BJ (cell line): ENCODE measurements at regions of chr5 and their contacts with region 1.

Region 1: DNA sequence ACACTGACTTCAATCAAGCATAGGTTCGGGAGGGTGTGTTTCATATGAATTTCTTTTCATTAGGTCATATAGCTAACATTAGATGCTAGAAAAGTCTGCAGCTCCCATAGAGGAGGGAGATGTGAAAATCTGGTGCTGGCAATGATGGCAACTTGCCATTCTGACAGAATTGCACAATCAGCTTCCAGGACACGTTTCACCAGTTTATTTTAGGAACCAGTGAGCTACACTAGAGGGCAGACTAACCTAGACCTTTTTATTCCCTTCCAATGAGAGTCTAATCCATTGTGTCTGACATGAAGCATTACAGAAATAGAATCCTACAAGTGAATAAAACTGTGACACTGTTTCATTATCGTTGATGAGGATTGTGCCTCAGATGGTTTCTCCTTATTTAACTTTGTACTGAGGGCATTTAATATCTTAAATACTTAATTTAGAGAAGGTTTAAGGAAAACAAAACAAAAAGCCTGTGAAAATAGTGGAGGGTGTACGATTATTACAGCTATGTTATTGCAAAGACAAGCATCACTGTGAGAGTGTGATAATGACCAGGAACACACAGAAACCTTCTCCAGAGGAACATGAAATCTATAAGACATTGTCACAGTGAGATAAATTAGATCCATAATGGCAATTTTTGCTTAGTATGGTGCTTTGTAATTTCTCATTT is 363.3 kb upstream of the RPS23 start:
- DNase-seq: peak; percentile 36
- H3K4me3 ChIP-seq: no peak overlapping the region
- H3K27me3 ChIP-seq: no peaks in the 10 kb centered on the region
- CTCF ChIP-seq: peak; percentile 71

Region 2: GRCh38 chr5:82439750-82440445 is 201.6 kb before region 1 on chr5:
- CTCF ChIA-PET with region 1: no interaction called
- POLR2A ChIA-PET with region 1: interaction called, 10 read pairs
- DNase-seq: no peak
- H3K4me3 ChIP-seq: no peak overlapping the region
- H3K27me3 ChIP-seq: no peaks in the 10 kb centered on the region
- CTCF ChIP-seq: no peak

Region 3: GRCh38 chr5:83564069-83564749 is 922.7 kb after region 1 on chr5:
- CTCF ChIA-PET with region 1: interaction called, 14 read pairs
- POLR2A ChIA-PET with region 1: no interaction called
- DNase-seq: no peak
- H3K4me3 ChIP-seq: no peak overlapping the region
- H3K27me3 ChIP-seq: no peaks in the 10 kb centered on the region
- CTCF ChIP-seq: peak; percentile 40